ENCODE measurements at regions of chr13 and their contacts with region 1.

Region 1: GRCh38 chr13:37074703-37075102 is 15.2 kb upstream of the SUPT20H start:
- DNase-seq: peak; percentile 49
- ATAC-seq: peak; percentile 77
- H3K4me3 ChIP-seq: no peak overlapping the region
- H3K27ac ChIP-seq: no peak overlapping the region
- H3K4me1 ChIP-seq: 0 out of 2 replicates have a peak, but pooled peaks cover 3% of the 10 kb centered on the region
- H3K27me3 ChIP-seq: no peaks in the 10 kb centered on the region
- CTCF ChIP-seq: peak; percentile 54
- POLR2A ChIP-seq: no peak
- RAD21 ChIP-seq: peak; percentile 52

Region 2: DNA sequence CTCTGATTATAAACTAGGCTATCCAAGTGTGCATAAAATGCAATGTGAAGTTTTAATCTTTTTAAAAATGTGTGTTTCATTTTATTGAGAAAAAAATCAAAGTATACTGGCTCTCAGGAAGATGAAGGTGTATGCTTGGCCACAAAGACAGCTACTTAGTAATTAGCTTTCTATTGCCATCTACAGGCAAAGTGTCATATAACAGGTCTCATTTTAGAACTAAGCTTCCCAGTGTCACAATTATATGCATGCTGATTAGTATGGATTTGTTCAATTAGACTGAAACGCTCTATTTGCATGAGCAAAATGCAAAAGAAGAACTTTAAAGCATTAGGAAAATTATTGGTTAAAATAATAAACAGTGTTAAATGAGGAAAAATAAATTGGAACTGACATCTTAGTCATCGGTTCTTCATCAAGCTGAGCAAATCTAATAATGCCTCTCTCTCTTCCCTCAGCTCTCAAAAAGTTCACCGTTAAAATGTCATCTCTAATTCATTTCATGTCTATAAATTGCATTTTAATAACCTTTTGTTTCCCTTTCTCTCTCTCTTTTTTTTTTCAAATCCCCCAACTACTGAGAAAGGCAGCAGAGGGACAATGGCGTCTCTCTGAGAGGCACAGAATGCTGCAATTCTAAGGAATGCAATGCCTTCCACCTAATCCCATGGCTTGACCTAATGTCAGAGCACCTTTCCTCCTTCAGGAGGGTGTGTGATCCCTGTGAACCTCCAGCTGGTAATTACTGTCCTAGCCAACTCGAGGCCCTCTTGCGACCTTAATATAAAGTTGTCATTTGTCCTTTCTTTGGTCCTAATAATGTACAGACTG is 1285.2 kb before region 1 on chr13:
- CTCF ChIA-PET with region 1: no interaction called
- POLR2A ChIA-PET with region 1: no interaction called
- dilution Hi-C with region 1: no loop called
- in situ Hi-C with region 1: no loop called
- intact Hi-C with region 1: no loop called
- DNase-seq: peak; percentile 61
- ATAC-seq: peak; percentile 86
- H3K4me3 ChIP-seq: no peak overlapping the region
- H3K27ac ChIP-seq: no peak overlapping the region
- H3K4me1 ChIP-seq: peaks cover 2% of the 10 kb centered on the region; the same call in 1 of the 2 replicates
- H3K27me3 ChIP-seq: no peaks in the 10 kb centered on the region
- CTCF ChIP-seq: peak; percentile 66
- POLR2A ChIP-seq: no peak
- RAD21 ChIP-seq: peak; percentile 70

Region 3: GRCh38 chr13:36880961-36881360 is 193.7 kb before region 1 on chr13:
- CTCF ChIA-PET with region 1: no interaction called
- POLR2A ChIA-PET with region 1: no interaction called
- dilution Hi-C with region 1: no loop called
- in situ Hi-C with region 1: no loop called
- intact Hi-C with region 1: no loop called
- DNase-seq: peak; percentile 15
- ATAC-seq: no peak
- H3K4me3 ChIP-seq: no peak overlapping the region
- H3K27ac ChIP-seq: no peak overlapping the region
- H3K4me1 ChIP-seq: peaks cover 6% of the 10 kb centered on the region
- H3K27me3 ChIP-seq: no peaks in the 10 kb centered on the region
- CTCF ChIP-seq: no peak
- POLR2A ChIP-seq: no peak
- RAD21 ChIP-seq: no peak

Region 4: GRCh38 chr13:37029617-37030016 is 45.1 kb before region 1 on chr13:
- CTCF ChIA-PET with region 1: no interaction called
- POLR2A ChIA-PET with region 1: no interaction called
- dilution Hi-C with region 1: no loop called
- in situ Hi-C with region 1: no loop called
- intact Hi-C with region 1: no loop called
- DNase-seq: peak; percentile 45
- ATAC-seq: 0 out of 2 replicates have a peak, but pooled peaks have one; percentile 29
- H3K4me3 ChIP-seq: no peak overlapping the region
- H3K27ac ChIP-seq: no peak overlapping the region
- H3K4me1 ChIP-seq: no peaks in the 10 kb centered on the region
- H3K27me3 ChIP-seq: no peaks in the 10 kb centered on the region
- CTCF ChIP-seq: no peak
- POLR2A ChIP-seq: no peak
- RAD21 ChIP-seq: no peak

Region 5: DNA sequence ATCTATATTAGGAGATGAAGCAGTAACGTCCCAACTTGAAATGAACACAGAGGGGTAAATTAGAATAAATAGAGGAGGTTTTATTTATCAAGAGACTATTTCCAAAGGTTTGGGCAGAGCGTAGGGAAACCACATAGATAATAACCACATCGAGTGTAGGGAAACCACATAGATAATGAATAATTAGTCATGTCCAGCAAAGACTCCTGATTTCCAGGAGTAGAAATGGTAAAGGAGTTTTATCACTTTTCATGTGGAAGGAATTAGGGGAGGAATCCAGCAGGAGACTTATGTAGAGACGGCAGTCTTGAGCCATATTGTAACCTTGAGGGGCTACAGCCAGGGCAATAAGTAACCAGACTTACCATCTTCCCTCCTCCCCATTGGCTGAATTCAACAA is 167.1 kb after region 1 on chr13:
- CTCF ChIA-PET with region 1: no interaction called
- POLR2A ChIA-PET with region 1: no interaction called
- dilution Hi-C with region 1: no loop called
- in situ Hi-C with region 1: no loop called
- intact Hi-C with region 1: no loop called
- DNase-seq: no peak
- ATAC-seq: no peak
- H3K4me3 ChIP-seq: no peak overlapping the region
- H3K27ac ChIP-seq: no peak overlapping the region
- H3K4me1 ChIP-seq: no peaks in the 10 kb centered on the region
- H3K27me3 ChIP-seq: no peaks in the 10 kb centered on the region
- CTCF ChIP-seq: no peak
- POLR2A ChIP-seq: no peak
- RAD21 ChIP-seq: no peak

Region 6: GRCh38 chr13:38223089-38223488 is 1148.4 kb after region 1 on chr13:
- CTCF ChIA-PET with region 1: no interaction called
- POLR2A ChIA-PET with region 1: no interaction called
- dilution Hi-C with region 1: no loop called
- in situ Hi-C with region 1: loop called (anchors 25 kb)
- intact Hi-C with region 1: no loop called
- DNase-seq: peak; percentile 1
- ATAC-seq: no peak
- H3K4me3 ChIP-seq: no peak overlapping the region
- H3K27ac ChIP-seq: no peak overlapping the region
- H3K4me1 ChIP-seq: no peaks in the 10 kb centered on the region
- H3K27me3 ChIP-seq: no peaks in the 10 kb centered on the region
- CTCF ChIP-seq: no peak
- POLR2A ChIP-seq: no peak
- RAD21 ChIP-seq: peak; percentile 34; the same call in 1 of the 2 replicates

Measured in IMR-90 (cell line).